ENCODE measurements at regions of chr10 and their contacts with region 1.

Region 1: DNA sequence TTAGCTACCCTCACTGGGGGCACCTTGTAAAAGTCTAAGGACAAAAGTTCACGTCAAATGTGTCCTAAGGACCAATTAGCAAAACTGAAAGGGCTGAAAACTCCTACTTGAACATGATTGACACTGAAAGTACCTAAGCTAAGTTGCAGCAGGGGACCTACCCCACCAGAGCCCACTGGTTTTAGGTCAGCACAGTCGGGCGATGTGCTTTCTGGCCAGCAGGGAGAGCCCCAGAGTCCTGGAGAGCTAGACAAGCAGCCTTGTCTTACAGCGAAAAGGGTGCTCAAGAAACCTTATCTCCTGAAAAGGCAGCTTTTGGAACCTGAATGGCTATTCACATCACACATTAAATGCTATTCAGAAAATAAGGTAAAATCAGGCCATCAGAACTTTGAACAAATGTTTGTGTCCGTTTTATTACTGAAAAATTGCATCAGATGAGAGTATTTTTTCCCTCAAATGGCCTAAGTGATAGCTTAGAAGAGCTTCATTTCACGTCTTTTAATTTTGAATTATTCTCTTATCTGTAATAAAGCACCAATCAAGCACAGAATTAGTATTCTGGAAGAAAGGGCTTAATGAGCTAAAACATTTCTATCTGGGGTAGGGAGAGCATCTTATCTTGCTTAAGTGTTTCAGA is 52.2 kb upstream of the MKI67 start:
- DNase-seq: peak; percentile 78
- ATAC-seq: peak; percentile 99
- H3K4me3 Mint-ChIP-seq: no peak overlapping the region
- H3K27ac Mint-ChIP-seq: no peak overlapping the region
- H3K4me1 Mint-ChIP-seq: peaks cover 13% of the 10 kb centered on the region
- H3K27me3 Mint-ChIP-seq: no peaks in the 10 kb centered on the region; the same call in 1 of the 2 replicates
- CTCF ChIP-seq: no peak

Region 2: DNA sequence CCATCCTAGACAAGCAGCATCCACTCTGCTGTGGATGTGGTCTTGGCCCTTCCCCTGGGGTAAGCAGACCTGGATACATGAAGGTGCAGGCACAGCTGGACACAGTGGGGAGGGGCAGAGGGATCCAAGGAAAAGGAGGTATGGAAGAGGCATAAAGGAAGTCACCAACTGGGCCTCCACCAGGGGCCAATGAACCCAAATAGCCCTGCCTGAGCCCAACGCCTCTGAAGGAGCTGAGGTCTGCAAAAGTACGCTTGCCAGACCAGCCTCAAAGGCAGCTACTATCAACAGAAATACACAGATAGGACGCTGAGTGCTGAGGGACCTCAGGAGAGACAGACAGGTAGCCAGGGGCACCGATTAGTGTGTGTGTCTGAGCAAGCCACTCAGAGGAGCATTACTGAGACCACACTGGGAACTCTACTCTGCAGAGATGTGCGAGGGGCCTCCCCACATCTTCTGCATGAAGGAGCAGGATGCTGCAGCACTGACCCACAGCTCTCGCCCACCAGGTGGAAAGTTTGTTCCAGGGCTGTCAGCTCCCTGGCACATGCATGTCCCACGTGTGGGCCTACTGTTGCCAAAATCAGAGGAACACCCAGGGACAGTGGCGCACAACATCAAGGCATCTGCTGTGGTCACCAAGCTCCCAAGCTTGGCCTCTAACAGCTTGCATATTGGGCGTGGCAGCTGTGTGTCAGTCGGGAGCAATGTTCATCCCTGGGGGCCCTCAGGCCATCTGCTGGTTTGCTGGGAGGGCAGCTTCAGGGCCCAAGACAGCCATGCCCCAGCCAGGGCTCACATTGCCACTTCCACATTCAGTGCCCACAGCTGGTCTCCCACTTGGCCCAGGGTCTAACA is 92.2 kb before region 1 on chr10:
- CTCF ChIA-PET with region 1: no interaction called
- POLR2A ChIA-PET with region 1: no interaction called
- DNase-seq: no peak
- ATAC-seq: peak; percentile 15; the same call in 1 of the 2 replicates
- H3K4me3 Mint-ChIP-seq: no peak overlapping the region
- H3K27ac Mint-ChIP-seq: no peak overlapping the region
- H3K4me1 Mint-ChIP-seq: peaks cover 33% of the 10 kb centered on the region
- H3K27me3 Mint-ChIP-seq: no peaks in the 10 kb centered on the region
- CTCF ChIP-seq: no peak

Region 3: GRCh38 chr10:128125944-128126764 is 52.3 kb before region 1 on chr10 and contains the start of gene MKI67:
- CTCF ChIA-PET with region 1: interaction called, 11 read pairs
- POLR2A ChIA-PET with region 1: no interaction called
- DNase-seq: peak; percentile 86
- ATAC-seq: peak; percentile 83
- H3K4me3 Mint-ChIP-seq: peak within 1 kb of the TSS; percentile 92
- H3K27ac Mint-ChIP-seq: peak within 1 kb of the TSS; percentile 68; the same call in 1 of the 2 replicates
- H3K4me1 Mint-ChIP-seq: peaks cover 35% of the 10 kb centered on the region
- H3K27me3 Mint-ChIP-seq: no peaks in the 10 kb centered on the region
- CTCF ChIP-seq: no peak
- total RNA-seq, gene MKI67: 93.6 to 118 TPM (median 96.5 TPM) in 3 replicates

Region 4: DNA sequence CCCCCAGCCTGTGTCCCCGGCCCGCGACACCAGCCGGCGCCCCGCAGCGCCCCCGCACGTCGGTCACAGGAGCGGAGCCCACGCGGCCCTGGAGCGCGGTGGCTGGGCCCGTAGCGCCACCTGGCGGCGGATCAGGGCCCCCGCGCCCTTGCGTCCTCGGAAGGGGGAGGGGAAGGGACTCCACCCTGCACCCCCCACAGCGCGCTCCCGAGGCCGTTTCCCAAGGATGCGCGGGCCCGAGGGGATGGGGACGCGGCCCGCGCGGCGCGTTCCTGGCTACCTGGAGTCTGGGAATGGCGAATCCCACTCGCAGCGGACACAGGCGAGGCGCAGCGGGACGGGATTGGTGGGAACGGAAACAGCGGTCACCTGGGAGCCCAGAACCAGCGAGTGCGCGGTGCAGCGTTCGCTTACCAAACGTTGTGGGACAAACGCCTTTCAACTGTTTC is 28.4 kb before region 1 on chr10:
- CTCF ChIA-PET with region 1: interaction called, 11 read pairs
- POLR2A ChIA-PET with region 1: no interaction called
- DNase-seq: peak; percentile 83
- ATAC-seq: peak; percentile 78
- H3K4me3 Mint-ChIP-seq: peak overlapping the region; percentile 64
- H3K27ac Mint-ChIP-seq: no peak overlapping the region
- H3K4me1 Mint-ChIP-seq: peaks cover 13% of the 10 kb centered on the region
- H3K27me3 Mint-ChIP-seq: peaks cover 13% of the 10 kb centered on the region
- CTCF ChIP-seq: peak; percentile 88

Region 5: GRCh38 chr10:128156999-128157755 is 21.3 kb before region 1 on chr10:
- CTCF ChIA-PET with region 1: interaction called, 11 read pairs
- POLR2A ChIA-PET with region 1: no interaction called
- DNase-seq: no peak
- ATAC-seq: no peak
- H3K4me3 Mint-ChIP-seq: no peak overlapping the region
- H3K27ac Mint-ChIP-seq: no peak overlapping the region
- H3K4me1 Mint-ChIP-seq: peaks cover 16% of the 10 kb centered on the region
- H3K27me3 Mint-ChIP-seq: no peaks in the 10 kb centered on the region; the same call in none of the 2 replicates
- CTCF ChIP-seq: no peak

Region 6: GRCh38 chr10:128165536-128165935 is 12.9 kb before region 1 on chr10:
- CTCF ChIA-PET with region 1: interaction called, 11 read pairs
- POLR2A ChIA-PET with region 1: no interaction called
- DNase-seq: no peak
- ATAC-seq: peak; percentile 65; the same call in 1 of the 2 replicates
- H3K4me3 Mint-ChIP-seq: no peak overlapping the region
- H3K27ac Mint-ChIP-seq: no peak overlapping the region
- H3K4me1 Mint-ChIP-seq: peaks cover 25% of the 10 kb centered on the region
- H3K27me3 Mint-ChIP-seq: no peaks in the 10 kb centered on the region
- CTCF ChIP-seq: no peak

Region 7: DNA sequence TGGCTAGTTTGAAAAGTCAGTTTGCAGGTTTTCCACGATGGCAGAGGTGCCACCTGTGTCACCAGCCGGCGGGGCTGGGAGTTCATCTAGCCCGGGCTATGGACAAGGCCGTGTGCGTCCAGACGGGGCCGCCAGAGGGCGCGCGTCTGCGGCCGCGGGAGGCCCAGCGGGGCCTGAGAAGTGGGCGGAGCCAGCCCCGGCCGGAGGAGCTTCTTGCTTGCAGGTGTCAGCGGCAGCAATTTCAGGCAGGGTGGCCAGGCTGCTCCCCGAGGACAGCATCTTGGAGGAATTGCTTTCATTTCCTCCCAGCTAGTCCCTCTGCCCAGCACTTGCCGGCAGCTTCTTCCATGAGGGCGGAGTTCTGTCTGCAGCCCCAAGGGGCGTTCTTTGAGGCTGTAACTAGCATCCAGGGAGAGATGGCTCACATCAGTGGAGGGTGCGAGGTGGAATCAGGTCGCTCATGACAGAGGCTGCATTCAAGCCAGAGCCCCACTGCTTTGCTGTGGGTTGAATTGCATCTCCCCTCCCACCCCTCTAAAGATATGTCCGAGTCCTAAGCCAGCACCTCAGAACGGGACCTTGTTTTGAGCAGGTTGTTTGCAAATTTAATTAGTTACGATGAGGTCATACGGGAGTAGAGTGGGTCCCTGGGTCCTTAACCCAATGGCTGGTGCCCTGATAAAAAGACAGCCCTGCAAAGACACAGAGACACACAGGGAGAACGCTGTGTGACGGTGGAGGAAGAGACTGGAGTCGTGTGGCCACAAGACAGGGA is 33.7 kb after region 1 on chr10:
- CTCF ChIA-PET with region 1: interaction called, 80 read pairs
- POLR2A ChIA-PET with region 1: no interaction called
- DNase-seq: peak; percentile 91
- ATAC-seq: peak; percentile 83
- H3K4me3 Mint-ChIP-seq: peak overlapping the region; percentile 63
- H3K27ac Mint-ChIP-seq: no peak overlapping the region
- H3K4me1 Mint-ChIP-seq: peaks cover 39% of the 10 kb centered on the region
- H3K27me3 Mint-ChIP-seq: peaks cover 13% of the 10 kb centered on the region
- CTCF ChIP-seq: peak; percentile 84

Region 8: DNA sequence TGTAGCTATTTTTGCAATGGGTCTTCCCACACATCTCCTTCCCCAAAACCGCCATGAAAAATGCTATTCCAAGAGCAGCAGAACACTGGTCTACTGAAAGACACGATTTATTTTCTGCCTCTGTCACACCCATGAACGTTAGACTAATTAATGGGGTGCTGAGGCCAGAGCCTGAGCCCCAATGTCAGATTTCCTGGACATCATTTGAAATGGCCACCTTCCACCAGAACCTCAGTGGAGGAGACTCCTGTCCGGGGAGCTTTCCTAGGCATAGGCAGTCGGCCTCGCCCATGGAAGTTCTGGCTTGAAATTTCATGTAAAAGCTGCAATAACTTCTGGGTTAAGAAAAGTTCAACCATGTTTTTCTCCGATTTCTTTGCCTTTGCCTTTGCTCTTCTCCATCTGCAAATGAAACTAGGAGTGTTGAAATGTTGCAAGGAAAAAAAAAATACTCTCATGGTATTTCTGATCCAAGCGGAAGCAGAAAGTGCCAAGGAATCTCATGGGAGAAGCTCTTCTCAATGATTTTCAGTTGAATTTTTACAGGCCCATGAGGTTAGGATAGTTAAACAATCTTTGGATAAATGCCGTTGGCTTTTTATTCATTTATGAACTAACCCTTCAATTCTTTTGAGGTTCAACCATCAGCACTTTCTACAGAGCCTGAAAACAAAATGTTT is 717.8 kb after region 1 on chr10:
- CTCF ChIA-PET with region 1: no interaction called
- POLR2A ChIA-PET with region 1: no interaction called
- DNase-seq: no peak
- ATAC-seq: no peak
- H3K4me3 Mint-ChIP-seq: no peak overlapping the region
- H3K27ac Mint-ChIP-seq: no peak overlapping the region
- H3K4me1 Mint-ChIP-seq: peaks cover 5% of the 10 kb centered on the region
- H3K27me3 Mint-ChIP-seq: no peaks in the 10 kb centered on the region
- CTCF ChIP-seq: no peak